ENCODE measurements at regions of chr9 and their contacts with region 1.

Region 1: DNA sequence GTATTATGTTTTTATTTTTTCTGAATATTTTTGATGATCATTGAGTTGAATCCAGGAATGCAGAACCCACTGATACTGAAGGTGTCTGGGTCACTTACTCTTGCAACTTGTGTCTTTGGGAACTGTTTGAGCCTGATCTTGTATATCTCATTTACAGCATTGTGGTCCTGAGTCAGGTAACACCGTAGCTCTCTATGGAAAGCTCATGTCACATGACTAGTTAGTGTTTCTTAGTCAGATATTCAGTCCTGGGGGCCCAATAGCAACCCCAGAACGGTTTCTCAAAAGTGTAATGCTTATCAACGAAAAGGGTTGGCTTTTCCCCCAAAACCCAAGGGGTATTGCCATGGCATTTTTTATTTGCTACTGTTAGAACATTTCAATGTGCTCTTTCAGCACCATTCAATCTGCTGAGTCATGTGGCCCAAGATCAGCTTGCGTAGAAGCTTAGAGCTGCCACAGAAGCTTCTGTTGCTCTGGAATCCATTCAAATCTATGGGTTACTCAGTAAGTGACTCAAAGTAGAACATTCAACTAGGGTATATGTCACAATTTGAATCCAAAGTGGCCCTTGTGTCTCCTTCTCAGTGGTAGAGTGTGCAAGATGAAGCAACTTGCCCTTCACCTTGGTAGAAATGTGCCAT is 12.1 kb upstream of the PTAR1 start:
- DNase-seq: no peak
- ATAC-seq: peak; percentile 37
- H3K4me3 ChIP-seq: no peak overlapping the region
- H3K27ac ChIP-seq: no peak overlapping the region
- H3K4me1 ChIP-seq: no peaks in the 10 kb centered on the region
- H3K27me3 ChIP-seq: no peaks in the 10 kb centered on the region
- CTCF ChIP-seq: no peak

Region 2: GRCh38 chr9:69834591-69835184 is 62.8 kb after region 1 on chr9:
- intact Hi-C with region 1: loop called in 1 of 2 experiments (anchors 10 kb)
- DNase-seq: no peak
- ATAC-seq: no peak
- H3K4me3 ChIP-seq: no peak overlapping the region
- H3K27ac ChIP-seq: no peak overlapping the region
- H3K4me1 ChIP-seq: no peaks in the 10 kb centered on the region
- H3K27me3 ChIP-seq: no peaks in the 10 kb centered on the region
- CTCF ChIP-seq: no peak